ENCODE measurements at regions of chr14 and their contacts with region 1.

Region 1: DNA sequence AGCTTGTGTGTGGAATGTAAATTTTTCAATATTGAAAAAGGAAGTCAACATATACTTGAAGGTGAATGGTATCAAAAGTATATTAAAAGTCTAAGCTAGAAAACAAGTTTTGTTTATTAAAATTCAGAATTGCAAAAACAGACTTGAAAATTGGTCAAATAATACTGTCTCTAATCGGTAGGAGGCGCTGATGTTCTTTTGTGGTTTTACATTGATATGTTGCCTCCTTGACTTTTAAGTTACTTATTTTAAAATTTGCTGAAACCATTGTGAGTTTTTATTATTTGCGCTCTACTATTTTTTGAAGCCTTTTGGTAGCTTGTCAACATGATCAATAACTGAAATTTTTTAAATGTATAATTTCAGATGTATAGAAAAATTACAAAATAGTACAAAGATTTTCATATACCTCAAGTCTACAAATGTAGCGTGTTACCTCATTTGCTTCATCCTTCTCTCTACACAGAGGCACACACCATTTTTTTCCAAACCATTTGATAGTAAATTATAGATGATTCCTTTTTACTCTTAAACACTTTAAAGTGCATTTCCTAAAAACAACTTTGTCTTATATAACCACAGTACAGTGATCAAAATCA is 6.9 kb downstream of the RTRAF start:
- DNase-seq: no peak
- ATAC-seq: no peak
- H3K4me3 Mint-ChIP-seq: no peak overlapping the region
- H3K27ac Mint-ChIP-seq: no peak overlapping the region
- H3K4me1 Mint-ChIP-seq: peaks cover 35% of the 10 kb centered on the region
- H3K27me3 Mint-ChIP-seq: no peaks in the 10 kb centered on the region

Region 2: GRCh38 chr14:51917193-51917592 is 79.1 kb before region 1 on chr14:
- CTCF ChIA-PET with region 1: no interaction called
- POLR2A ChIA-PET with region 1: no interaction called
- intact Hi-C with region 1: no loop called
- DNase-seq: no peak
- ATAC-seq: no peak
- H3K4me3 Mint-ChIP-seq: no peak overlapping the region
- H3K27ac Mint-ChIP-seq: no peak overlapping the region
- H3K4me1 Mint-ChIP-seq: peaks cover 61% of the 10 kb centered on the region
- H3K27me3 Mint-ChIP-seq: no peaks in the 10 kb centered on the region

Region 3: DNA sequence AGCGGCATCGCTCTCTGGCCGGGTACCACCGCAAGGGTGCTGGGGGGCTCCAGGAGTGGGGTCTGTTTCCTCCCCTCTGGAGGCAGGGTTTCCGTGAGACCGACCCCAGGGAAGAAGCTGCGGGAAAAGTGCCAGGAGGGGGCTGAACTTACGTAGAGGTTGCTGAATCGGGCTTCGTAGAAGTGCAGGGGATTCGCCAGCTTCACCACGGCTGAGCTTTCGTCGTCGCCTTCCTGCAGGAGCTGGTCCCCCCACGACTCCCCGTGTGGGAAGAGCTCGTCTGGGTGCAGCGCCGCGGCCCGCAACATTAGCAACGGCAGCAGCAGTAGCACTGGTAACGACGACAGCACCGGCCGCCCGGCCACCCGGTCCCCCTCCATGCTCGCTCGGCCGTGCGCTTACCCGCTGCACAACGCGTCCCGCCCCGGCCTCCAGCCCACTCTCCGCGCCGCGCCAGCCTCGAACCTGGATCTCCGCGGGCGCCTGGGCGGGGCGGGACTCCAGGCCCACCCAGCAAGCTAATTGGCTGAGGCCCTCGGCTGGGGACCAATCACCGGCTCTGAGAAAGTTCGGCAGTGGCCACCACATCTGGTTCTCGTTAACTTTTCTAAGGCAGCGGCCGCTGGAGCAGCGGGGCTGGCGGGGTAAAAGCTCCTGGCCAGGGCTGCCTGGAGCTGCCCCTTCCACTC is 72.5 kb after region 1 on chr14 and contains the start of gene NID2:
- CTCF ChIA-PET with region 1: interaction called, 5 read pairs
- POLR2A ChIA-PET with region 1: no interaction called
- intact Hi-C with region 1: loop called in 1 of 2 experiments (anchors 2 kb)
- DNase-seq: peak; percentile 65
- ATAC-seq: peak; percentile 84
- H3K4me3 Mint-ChIP-seq: peak within 1 kb of the TSS; percentile 55
- H3K27ac Mint-ChIP-seq: no peak within 1 kb of the TSS
- H3K4me1 Mint-ChIP-seq: peaks cover 22% of the 10 kb centered on the region
- H3K27me3 Mint-ChIP-seq: peaks cover 47% of the 10 kb centered on the region
- total RNA-seq, gene NID2: not detected

Region 4: DNA sequence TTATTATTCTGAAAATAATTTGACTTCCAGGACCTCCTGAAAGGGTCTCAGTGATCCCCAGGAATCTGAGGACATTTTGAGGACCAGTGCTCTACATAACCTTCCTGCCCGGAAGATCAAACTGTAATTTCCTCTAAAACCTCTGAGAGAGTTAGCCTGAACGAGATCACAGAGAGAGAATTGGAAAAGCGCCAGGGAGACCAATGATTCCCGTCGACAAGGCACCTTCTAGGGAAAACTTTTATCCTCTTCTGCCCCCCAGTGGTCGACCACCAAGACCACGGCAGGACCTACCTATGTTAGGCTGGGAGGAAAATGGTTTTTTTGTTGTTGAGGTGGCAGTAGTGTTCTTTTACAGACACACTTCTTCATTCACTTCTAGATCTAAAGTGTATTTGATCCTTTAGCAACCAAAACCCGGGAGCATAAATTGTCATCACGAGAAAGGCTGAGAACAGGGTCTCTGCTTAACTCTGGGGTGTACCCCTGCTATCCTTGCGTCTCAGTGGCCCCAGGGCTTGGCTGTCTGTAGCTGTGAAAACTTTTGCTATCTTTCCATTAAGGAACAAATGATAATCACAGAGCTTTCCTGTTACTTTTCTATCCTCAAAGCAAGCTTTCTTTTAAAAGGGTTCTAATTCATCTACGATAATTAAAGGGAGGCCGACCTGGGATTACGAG is 135.5 kb after region 1 on chr14:
- CTCF ChIA-PET with region 1: interaction called, 6 read pairs
- POLR2A ChIA-PET with region 1: no interaction called
- intact Hi-C with region 1: loop called (anchors 1 to 2 kb)
- DNase-seq: peak; percentile 70
- ATAC-seq: peak; percentile 68
- H3K4me3 Mint-ChIP-seq: no peak overlapping the region
- H3K27ac Mint-ChIP-seq: no peak overlapping the region
- H3K4me1 Mint-ChIP-seq: peaks cover 7% of the 10 kb centered on the region
- H3K27me3 Mint-ChIP-seq: peaks cover 8% of the 10 kb centered on the region

Region 5: DNA sequence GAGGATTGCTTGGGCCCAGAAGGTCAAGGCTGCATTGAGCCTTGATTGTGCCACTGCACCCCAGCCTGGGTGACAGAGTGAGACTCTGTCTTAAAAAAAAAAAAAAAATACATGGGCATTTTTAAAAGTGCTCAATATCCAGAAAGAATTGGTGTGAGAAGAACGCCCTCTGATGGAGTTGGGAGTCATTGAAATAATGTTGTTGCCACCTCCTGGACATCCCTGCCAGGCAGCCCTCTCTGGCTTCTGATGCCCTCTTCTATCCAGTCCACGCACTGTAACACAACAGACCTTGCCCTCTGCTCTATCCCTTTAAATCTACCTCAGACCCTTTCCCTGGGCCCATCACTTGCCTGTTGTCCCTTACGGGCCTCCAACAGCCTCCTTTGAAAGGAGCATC is 276.1 kb after region 1 on chr14:
- CTCF ChIA-PET with region 1: interaction called, 9 read pairs
- POLR2A ChIA-PET with region 1: no interaction called
- intact Hi-C with region 1: loop called (anchors 2 to 5 kb)
- DNase-seq: peak; percentile 37
- ATAC-seq: peak; percentile 27
- H3K4me3 Mint-ChIP-seq: no peak overlapping the region
- H3K27ac Mint-ChIP-seq: no peak overlapping the region
- H3K4me1 Mint-ChIP-seq: peaks cover 18% of the 10 kb centered on the region
- H3K27me3 Mint-ChIP-seq: peaks cover 30% of the 10 kb centered on the region

Region 6: GRCh38 chr14:52473557-52473956 is 477.3 kb after region 1 on chr14:
- CTCF ChIA-PET with region 1: no interaction called
- POLR2A ChIA-PET with region 1: no interaction called
- intact Hi-C with region 1: loop called in 1 of 2 experiments (anchors 1 kb)
- DNase-seq: no peak
- ATAC-seq: peak; percentile 26
- H3K4me3 Mint-ChIP-seq: no peak overlapping the region
- H3K27ac Mint-ChIP-seq: no peak overlapping the region
- H3K4me1 Mint-ChIP-seq: peaks cover 3% of the 10 kb centered on the region
- H3K27me3 Mint-ChIP-seq: no peaks in the 10 kb centered on the region

Region 7: DNA sequence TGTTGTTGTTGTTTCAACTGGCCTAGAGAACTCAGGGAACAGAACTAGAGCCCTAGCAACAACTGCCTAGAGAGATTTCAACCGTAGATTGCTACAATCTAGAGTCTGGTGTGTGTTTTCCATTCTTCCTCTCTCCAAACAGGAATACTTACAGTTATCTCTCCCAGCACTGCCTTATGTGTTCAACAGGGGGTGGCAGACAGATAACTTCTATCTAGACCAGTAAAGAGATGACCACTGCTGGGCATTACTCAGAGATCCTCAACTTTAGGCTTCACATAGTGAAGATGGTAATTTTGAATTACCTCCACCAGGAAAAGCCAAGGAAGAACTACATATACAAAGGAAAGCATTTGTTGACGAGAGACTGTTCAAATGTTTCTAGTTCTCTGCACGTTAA is 551.3 kb after region 1 on chr14:
- CTCF ChIA-PET with region 1: no interaction called
- POLR2A ChIA-PET with region 1: no interaction called
- intact Hi-C with region 1: no loop called
- DNase-seq: no peak
- ATAC-seq: no peak
- H3K4me3 Mint-ChIP-seq: no peak overlapping the region
- H3K27ac Mint-ChIP-seq: no peak overlapping the region
- H3K4me1 Mint-ChIP-seq: peaks cover 16% of the 10 kb centered on the region
- H3K27me3 Mint-ChIP-seq: no peaks in the 10 kb centered on the region